GM10248 (cell line): ENCODE measurements at regions of chr13 and their contacts with region 1.

Region 1: DNA sequence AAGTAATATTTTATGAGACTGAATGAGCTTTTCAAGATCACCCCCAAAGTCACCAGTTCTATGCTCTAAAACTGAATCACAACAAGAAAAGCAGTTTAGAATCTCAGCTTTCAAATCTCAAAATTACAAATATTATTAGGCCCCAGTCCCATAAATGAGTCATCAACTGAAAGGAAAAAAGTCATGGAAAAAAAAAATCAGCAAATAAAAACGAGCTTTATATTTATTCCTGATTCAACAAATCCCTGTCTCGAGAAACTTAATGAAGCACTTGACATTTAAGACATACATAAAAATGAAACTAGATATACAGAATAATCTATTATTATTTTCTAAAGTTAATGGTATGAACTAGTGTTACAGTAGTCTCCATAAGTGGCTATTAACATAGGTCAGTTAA is 203.0 kb downstream of the DIAPH3 start:
- DNase-seq: no peak
- CTCF ChIP-seq: no peak

Region 2: GRCh38 chr13:59946944-59947343 is 13.7 kb before region 1 on chr13:
- CTCF ChIA-PET with region 1: interaction called, 27 read pairs
- POLR2A ChIA-PET with region 1: no interaction called
- DNase-seq: no peak
- CTCF ChIP-seq: no peak

Region 3: GRCh38 chr13:59970847-59971246 is 10.2 kb after region 1 on chr13:
- CTCF ChIA-PET with region 1: interaction called, 16 read pairs
- POLR2A ChIA-PET with region 1: no interaction called
- DNase-seq: no peak
- CTCF ChIP-seq: no peak

Region 4: DNA sequence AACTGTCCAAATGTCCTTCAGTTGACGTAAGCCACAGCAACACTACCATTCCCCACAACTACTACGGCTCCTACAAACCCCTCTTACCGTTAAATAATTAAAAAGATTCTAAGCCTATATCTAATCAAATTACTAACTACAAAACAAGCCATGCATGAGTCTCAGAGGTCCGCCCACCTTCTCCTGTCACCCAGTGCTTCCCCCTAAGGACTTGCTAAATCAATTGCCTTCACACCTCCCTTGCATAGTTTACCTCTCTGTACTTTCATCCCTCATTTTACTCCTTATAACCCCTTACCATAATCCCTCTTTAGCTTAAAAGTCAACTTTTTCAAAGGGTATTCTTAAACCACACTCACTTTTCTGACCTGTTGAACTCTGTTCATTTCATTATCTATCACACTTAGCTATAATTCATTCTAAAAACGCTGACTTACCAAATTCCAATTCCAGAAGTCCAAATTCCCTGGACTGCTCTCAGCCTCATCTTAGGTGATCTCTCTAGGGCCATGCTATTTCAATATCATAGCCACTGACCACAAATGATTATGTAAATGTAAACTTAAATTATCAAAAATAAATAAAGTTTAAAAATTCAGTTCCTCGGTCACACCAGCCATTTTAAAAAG is 15.2 kb after region 1 on chr13:
- CTCF ChIA-PET with region 1: interaction called, 16 read pairs
- POLR2A ChIA-PET with region 1: no interaction called
- DNase-seq: no peak
- CTCF ChIP-seq: no peak

Region 5: GRCh38 chr13:60175571-60175970 is 214.9 kb after region 1 on chr13:
- CTCF ChIA-PET with region 1: no interaction called
- POLR2A ChIA-PET with region 1: no interaction called
- DNase-seq: no peak
- CTCF ChIP-seq: no peak

Region 6: GRCh38 chr13:60798503-60798902 is 837.8 kb after region 1 on chr13:
- CTCF ChIA-PET with region 1: no interaction called
- POLR2A ChIA-PET with region 1: no interaction called
- DNase-seq: no peak
- CTCF ChIP-seq: no peak